Activated CD4-positive, alpha-beta memory T cell treated with anti-CD3 and anti-CD28 coated beads for 36 hours (primary cell): ENCODE measurements at regions of chr2 and their contacts with region 1.

Region 1: DNA sequence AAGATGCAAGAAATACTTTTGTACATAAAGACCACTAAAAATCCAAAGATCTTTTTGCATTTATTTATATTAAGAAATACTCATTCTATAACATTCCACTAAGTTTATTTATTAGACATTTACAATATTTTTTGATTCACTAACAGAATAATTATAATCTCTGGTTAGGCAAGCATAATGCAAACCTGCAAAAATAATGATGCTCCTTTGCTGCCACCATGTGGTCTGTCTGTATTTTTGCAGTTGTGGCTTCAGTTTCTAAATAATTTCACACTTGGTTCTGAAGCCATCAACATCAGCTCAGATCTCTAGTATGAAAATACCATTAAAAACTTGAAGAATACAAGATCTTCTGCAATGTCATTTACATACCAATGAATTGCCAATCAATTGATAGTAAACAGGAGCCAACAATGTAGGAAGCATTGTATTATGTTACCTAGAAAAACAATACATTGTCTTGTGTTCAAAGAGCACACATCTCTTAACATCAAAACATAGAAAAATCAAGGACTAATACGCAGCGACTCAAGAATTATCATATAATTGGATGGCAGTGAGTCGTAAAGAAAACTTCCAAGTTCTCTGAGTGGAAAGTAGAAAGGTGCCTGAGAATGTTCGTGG is 28.8 kb upstream of the WDR75 start:
- DNase-seq: peak; percentile 49
- H3K4me3 Mint-ChIP-seq: no peak overlapping the region
- H3K27ac Mint-ChIP-seq: no peak overlapping the region
- H3K4me1 Mint-ChIP-seq: peaks cover 9% of the 10 kb centered on the region
- H3K27me3 Mint-ChIP-seq: no peaks in the 10 kb centered on the region

Region 2: DNA sequence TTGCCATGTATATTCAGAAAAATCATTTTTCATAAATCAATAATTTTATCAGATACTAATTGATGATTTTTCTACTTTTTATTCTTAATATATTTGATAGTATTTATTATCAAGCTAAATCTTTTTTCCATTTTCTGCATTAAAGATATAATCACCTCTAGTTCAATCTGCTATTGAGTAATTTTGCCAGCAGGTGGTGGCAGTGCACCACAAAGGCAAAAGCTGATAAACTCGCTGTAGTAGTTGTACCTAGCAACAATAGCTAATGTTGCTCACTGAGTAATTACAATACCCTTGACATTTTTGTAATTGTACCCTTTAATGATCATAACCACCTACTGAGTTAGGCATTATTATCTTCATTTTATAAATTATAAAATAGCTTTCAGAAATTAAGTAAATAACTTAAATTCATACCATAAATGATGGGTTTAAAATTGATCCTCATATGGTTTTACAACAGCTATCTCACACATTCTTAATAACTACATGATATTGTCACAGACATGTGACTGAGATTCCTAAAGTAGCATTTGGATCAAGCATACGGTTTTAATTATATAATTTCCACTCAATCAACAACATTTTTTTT is 1912.4 kb before region 1 on chr2:
- CTCF ChIA-PET with region 1: interaction called, 3 read pairs
- POLR2A ChIA-PET with region 1: no interaction called
- intact Hi-C with region 1: loop called (anchors 5 kb)
- DNase-seq: peak; percentile 51
- H3K4me3 Mint-ChIP-seq: no peak overlapping the region
- H3K27ac Mint-ChIP-seq: no peak overlapping the region
- H3K4me1 Mint-ChIP-seq: no peaks in the 10 kb centered on the region
- H3K27me3 Mint-ChIP-seq: peaks cover 4% of the 10 kb centered on the region

Region 3: DNA sequence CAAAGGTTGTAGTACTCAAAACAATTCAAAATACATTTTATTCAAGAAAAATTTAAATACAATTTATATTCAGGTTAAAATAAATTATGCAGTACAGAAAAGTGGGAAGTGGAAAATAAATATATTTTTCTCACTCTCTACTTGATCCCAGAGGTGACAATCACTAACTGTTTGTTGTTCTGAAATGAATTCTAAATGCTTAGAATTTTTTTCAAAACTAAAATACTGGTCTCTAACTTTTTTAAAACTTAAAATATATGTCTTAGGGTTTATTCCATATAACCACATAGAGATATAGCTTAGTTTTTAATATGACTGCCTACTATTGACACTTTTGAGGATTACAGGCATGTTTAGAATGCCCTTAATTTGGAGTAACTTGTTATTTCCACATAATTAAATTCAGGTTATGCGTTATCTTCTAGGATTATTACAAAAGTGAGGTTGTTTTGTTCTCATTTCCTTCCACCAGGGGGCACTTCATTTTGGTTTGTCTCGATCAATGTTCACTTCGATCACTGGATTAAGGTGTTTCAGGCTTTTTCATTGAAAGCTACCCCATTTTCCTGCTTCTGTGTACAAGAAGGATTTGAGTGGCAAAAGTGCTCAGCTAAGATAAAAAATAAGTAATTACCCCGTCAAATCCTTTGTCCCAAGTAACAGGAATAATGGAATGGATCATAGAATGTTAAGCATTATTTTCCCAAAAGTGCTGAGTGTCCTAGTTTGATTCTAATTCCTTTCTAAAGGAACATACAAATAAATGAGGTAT is 1831.1 kb before region 1 on chr2:
- CTCF ChIA-PET with region 1: no interaction called
- POLR2A ChIA-PET with region 1: no interaction called
- intact Hi-C with region 1: loop called (anchors 5 kb)
- DNase-seq: no peak
- H3K4me3 Mint-ChIP-seq: no peak overlapping the region
- H3K27ac Mint-ChIP-seq: no peak overlapping the region
- H3K4me1 Mint-ChIP-seq: peaks cover 6% of the 10 kb centered on the region
- H3K27me3 Mint-ChIP-seq: peaks cover 1% of the 10 kb centered on the region

Region 4: GRCh38 chr2:188524519-188525113 is 887.8 kb before region 1 on chr2:
- CTCF ChIA-PET with region 1: interaction called, 12 read pairs
- POLR2A ChIA-PET with region 1: no interaction called
- intact Hi-C with region 1: loop called (anchors 1 kb)
- DNase-seq: peak; percentile 22
- H3K4me3 Mint-ChIP-seq: no peak overlapping the region
- H3K27ac Mint-ChIP-seq: no peak overlapping the region
- H3K4me1 Mint-ChIP-seq: no peaks in the 10 kb centered on the region
- H3K27me3 Mint-ChIP-seq: peaks cover 3% of the 10 kb centered on the region

Region 5: GRCh38 chr2:189096769-189097447 is 315.5 kb before region 1 on chr2:
- CTCF ChIA-PET with region 1: interaction called, 35 read pairs
- POLR2A ChIA-PET with region 1: no interaction called
- intact Hi-C with region 1: loop called (anchors 1 kb)
- DNase-seq: no peak
- H3K4me3 Mint-ChIP-seq: no peak overlapping the region
- H3K27ac Mint-ChIP-seq: no peak overlapping the region
- H3K4me1 Mint-ChIP-seq: no peaks in the 10 kb centered on the region
- H3K27me3 Mint-ChIP-seq: no peaks in the 10 kb centered on the region

Region 6: GRCh38 chr2:189142893-189143759 is 269.3 kb before region 1 on chr2:
- CTCF ChIA-PET with region 1: interaction called, 58 read pairs
- POLR2A ChIA-PET with region 1: interaction called, 3 read pairs
- intact Hi-C with region 1: loop called (anchors 1 kb)
- DNase-seq: peak; percentile 52
- H3K4me3 Mint-ChIP-seq: no peak overlapping the region
- H3K27ac Mint-ChIP-seq: no peak overlapping the region
- H3K4me1 Mint-ChIP-seq: no peaks in the 10 kb centered on the region
- H3K27me3 Mint-ChIP-seq: no peaks in the 10 kb centered on the region

Region 7: DNA sequence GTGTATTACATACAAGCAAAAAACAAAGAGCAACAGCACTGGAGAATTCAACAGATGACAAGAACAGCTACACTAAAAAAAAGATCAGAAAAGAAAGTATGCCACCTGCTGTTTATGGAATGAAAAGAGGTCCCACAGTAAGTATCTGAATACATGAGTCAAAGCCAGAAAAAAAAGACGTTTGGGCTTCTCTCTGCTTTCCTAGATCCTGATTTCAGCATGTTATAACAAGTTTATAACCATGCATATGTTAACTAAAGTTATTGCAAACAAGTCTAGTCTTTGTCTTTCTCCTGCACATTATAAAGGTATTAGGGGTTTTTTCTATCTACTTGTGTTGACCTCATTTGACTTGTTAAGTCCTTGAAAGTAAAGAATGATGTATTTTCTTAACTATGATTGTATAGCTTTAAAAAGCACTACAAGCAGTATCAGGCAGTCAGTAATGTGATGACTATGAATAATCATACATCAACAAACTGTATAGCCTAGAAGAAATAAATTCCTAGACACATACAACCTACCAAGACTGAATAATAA is 124.4 kb before region 1 on chr2:
- CTCF ChIA-PET with region 1: interaction called, 3 read pairs
- POLR2A ChIA-PET with region 1: no interaction called
- intact Hi-C with region 1: loop called (anchors 2 kb)
- DNase-seq: no peak
- H3K4me3 Mint-ChIP-seq: no peak overlapping the region
- H3K27ac Mint-ChIP-seq: no peak overlapping the region
- H3K4me1 Mint-ChIP-seq: peaks cover 38% of the 10 kb centered on the region
- H3K27me3 Mint-ChIP-seq: no peaks in the 10 kb centered on the region